Heart right ventricle (tissue), 16 donors: ENCODE measurements at regions of chr6 and their contacts with region 1.

Region 1: GRCh38 chr6:148947621-148948444 is 201.0 kb downstream of the UST start:
- DNase-seq: peak; percentile 66 to 85
- ATAC-seq: peak; percentile 83 to 94 (median 92)
- H3K4me3 ChIP-seq: no peak overlapping the region
- H3K27ac ChIP-seq: no peak overlapping the region
- H3K4me1 ChIP-seq: peaks cover 0 to 12% (median 0%) of the 10 kb centered on the region in 9 donors
- H3K27me3 ChIP-seq: no peaks in the 10 kb centered on the region
- CTCF ChIP-seq: peak; percentile 83 to 93 (median 91)

Region 2: GRCh38 chr6:148559848-148560433 is 387.9 kb before region 1 on chr6:
- intact Hi-C with region 1: loop called in 1 of 10 experiments (anchors 5 kb)
- DNase-seq: peak; percentile 63 to 83
- ATAC-seq: peak; percentile 81 to 90 (median 86)
- H3K4me3 ChIP-seq: peak overlapping the region; percentile 13 to 59 (median 53)
- H3K27ac ChIP-seq: peak overlapping the region in 2 of 10 donors; percentile 8 to 52
- H3K4me1 ChIP-seq: peaks cover 0 to 19% (median 4%) of the 10 kb centered on the region in 9 donors
- H3K27me3 ChIP-seq: no peaks in the 10 kb centered on the region
- CTCF ChIP-seq: peak; percentile 96 to 99 (median 99)

Region 3: DNA sequence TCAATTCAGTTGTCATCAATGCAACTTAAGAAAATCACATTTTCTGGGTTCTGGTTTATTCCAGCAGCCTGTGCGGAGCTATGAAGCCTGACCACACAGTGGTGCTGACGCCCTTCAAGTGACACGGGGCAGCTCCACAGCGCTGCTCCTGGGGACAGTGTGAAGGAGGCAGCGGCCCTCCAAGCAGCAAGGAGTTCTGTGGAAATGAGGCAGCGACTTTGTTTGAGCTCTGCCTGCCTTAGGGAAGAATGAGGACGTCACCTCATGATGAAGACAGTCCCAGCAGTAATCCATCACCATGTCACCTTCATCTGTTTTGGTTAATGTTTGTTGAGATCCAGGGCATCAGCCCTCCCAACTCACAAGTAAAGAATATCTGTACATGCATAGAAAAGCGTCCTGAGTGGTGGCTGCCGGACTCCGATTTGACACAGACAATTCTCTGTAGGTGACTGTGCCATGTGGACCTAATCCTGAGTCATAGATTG is 369.5 kb before region 1 on chr6:
- intact Hi-C with region 1: loop called (anchors 1 to 5 kb)
- DNase-seq: peak; percentile 61 to 75
- ATAC-seq: peak; percentile 97 to 100 (median 99)
- H3K4me3 ChIP-seq: no peak overlapping the region
- H3K27ac ChIP-seq: no peak overlapping the region
- H3K4me1 ChIP-seq: no peaks in the 10 kb centered on the region
- H3K27me3 ChIP-seq: peaks cover 0 to 11% (median 4%) of the 10 kb centered on the region in 7 donors
- CTCF ChIP-seq: peak; percentile 60 to 96 (median 81)

Region 4: DNA sequence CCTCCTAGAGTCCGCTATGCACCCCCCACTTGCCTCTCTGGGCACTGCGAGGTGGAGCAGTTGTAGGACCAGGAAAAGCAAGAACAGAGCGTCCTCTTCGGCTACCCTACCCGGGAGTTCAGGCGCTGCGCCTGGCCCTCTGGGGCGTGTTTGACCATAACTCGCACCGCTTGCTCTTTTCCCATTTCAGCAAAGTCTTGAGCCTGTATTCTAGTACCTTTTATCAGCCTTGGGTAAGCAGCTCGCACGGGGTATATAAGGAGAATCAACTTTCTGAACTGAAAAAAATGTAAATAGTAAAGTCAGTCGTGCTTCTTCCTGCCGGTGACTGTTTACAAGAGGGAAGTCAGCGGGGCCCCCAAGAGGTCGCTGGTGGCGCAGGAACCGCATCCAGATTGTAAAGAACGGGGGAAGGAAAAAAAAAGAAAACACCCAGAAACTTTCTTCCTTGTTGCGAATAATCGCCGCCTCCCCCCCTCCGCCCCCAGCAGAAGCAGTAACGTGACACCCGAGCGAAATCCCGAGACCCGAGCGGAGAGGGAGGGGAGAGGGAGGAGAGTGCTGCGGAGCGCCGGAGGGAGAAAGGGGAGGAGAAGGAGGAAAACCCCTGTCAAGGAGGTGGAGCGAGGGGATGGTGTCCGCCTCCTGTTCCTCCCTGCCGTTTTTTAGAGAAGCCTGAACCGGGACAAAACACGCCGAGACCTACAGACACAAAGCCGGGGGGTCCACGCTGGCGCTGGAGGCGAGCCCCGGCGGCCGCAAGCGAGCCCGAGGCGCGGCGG is 201.3 kb before region 1 on chr6 and contains the start of gene UST:
- intact Hi-C with region 1: loop called (anchors 2 to 5 kb)
- DNase-seq: peak; percentile 78 to 81
- ATAC-seq: peak; percentile 83 to 93 (median 88)
- H3K4me3 ChIP-seq: peak within 1 kb of the TSS; percentile 58 to 92 (median 72)
- H3K27ac ChIP-seq: peak within 1 kb of the TSS; percentile 71 to 88 (median 76)
- H3K4me1 ChIP-seq: peaks cover 0 to 25% (median 17%) of the 10 kb centered on the region in 9 donors
- H3K27me3 ChIP-seq: peaks cover 0 to 57% (median 15%) of the 10 kb centered on the region in 7 donors
- CTCF ChIP-seq: peak in 7 of 9 donors; percentile 22 to 70 (median 57)
- total RNA-seq, gene UST: 1.6 to 4.1 (median 2.2) TPM